Activated CD4-positive, alpha-beta T cell treated with anti-CD3 and anti-CD28 coated beads, Interleukin-2, amount 10 ng/mL, durations not matched to agents 24 days and 14 days (primary cell): ENCODE measurements at regions of chr1 and their contacts with region 1.

Region 1: GRCh38 chr1:76154206-76154956 is 79.8 kb downstream of the ST6GALNAC3 start:
- DNase-seq: peak; percentile 94
- H3K4me3 Mint-ChIP-seq: peak overlapping the region; percentile 84
- H3K27ac Mint-ChIP-seq: peak overlapping the region; percentile 88
- H3K4me1 Mint-ChIP-seq: peaks cover 7% of the 10 kb centered on the region
- H3K27me3 Mint-ChIP-seq: no peaks in the 10 kb centered on the region

Region 2: DNA sequence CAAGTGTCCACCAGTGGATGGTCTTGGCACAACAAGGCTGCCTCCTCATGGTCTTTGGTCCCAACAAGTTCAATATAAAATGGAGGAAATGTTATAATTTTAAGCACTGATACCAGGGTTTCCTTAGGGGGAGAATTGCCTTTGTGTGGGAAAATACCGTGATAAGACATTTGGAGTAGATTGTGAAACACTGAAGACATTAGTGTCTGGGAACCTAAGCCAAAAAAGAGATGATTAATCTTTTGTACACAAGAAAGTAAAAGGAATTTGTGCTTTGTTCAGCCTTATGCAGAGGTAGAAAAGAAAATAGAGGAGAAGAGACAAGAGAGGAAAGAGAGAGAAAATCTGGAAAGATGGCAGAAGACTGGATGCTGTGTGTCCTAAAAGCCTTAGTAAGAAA is 43.7 kb before region 1 on chr1:
- intact Hi-C with region 1: no loop called
- DNase-seq: no peak
- H3K4me3 Mint-ChIP-seq: no peak overlapping the region
- H3K27ac Mint-ChIP-seq: no peak overlapping the region
- H3K4me1 Mint-ChIP-seq: no peaks in the 10 kb centered on the region
- H3K27me3 Mint-ChIP-seq: no peaks in the 10 kb centered on the region

Region 3: DNA sequence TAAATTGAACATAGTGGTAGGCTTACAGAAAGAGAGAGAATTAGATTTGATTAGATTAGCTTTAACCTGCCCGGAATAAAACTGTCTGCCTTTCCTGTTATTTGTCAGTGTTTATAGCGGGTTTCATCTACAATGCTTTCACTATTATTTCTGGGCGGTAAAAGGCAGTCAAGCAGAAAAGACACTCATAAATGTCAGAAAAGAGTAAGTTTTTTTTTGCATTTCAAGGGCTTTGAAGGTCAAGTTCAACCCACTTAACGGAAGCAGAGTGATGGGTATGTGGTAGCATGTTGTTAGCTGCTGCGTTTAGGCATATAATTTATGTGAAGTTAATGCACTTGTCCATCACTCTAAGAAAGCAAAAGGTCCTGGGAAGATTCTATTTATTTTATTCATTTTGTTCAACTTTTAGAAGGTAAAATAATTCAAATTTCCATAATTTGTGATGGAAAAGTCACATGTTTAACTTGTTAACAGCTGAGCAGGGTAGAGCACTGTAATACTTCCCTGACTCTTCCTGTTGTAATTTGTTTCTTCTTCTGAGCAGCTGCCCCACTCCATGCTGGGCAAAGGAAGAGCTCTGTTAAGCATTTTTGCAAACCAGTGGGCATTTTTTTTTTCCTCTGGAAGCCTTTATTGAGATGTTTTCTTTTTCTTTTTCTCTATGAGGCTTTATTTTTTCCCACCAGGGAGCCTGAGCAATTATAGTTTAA is 140.3 kb after region 1 on chr1:
- intact Hi-C with region 1: loop called (anchors 10 kb)
- DNase-seq: peak; percentile 67
- H3K4me3 Mint-ChIP-seq: peak overlapping the region; percentile 54
- H3K27ac Mint-ChIP-seq: peak overlapping the region; percentile 35
- H3K4me1 Mint-ChIP-seq: peaks cover 41% of the 10 kb centered on the region
- H3K27me3 Mint-ChIP-seq: no peaks in the 10 kb centered on the region

Region 4: DNA sequence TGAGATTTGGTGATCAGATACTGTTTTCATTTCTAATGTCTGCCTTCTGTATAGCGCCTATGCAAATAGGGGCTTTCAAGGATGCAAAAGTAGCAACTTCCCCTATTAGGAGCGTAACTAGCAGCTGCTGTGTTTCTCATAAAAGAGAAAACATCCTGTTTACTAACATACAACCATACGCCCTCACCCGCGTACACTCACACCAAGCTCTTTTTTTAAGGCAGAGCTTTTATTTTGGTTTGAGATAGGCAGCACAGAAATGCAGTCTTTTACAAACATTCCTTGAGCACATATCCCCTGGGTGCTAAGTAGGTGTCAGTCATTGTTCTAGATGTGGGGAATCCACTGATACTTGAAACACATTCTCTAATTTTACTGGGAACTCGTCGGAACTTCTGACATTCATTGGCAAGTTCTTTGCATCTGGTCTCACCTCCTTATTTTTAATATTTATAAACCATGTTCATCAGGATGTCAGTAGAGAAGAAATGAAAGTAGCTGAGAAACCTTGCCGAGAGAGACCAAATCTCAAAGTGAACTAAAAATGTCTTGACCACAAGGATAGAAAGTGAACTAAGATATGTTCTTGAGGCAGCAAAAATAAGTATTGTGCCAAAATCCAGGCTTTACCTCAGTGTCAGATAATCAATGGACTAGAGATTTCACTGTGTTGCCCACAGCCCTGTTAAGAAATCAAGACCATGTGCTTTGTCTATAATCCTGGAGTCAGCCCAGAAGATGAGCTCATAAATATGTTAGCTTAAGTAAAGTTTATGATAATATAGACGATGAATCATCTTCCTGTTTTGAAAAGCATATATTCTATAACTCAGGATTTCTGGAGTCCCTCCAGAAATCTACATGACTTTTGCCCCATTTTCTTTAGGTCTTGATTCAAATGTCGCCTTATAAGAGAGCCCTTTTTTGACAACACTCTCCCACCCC is 271.1 kb after region 1 on chr1:
- intact Hi-C with region 1: loop called (anchors 10 kb)
- DNase-seq: no peak
- H3K4me3 Mint-ChIP-seq: no peak overlapping the region
- H3K27ac Mint-ChIP-seq: no peak overlapping the region
- H3K4me1 Mint-ChIP-seq: no peaks in the 10 kb centered on the region
- H3K27me3 Mint-ChIP-seq: no peaks in the 10 kb centered on the region

Region 5: GRCh38 chr1:76868154-76868882 is 713.9 kb after region 1 on chr1:
- intact Hi-C with region 1: loop called (anchors 10 kb)
- DNase-seq: peak; percentile 60
- H3K4me3 Mint-ChIP-seq: peak overlapping the region; percentile 77
- H3K27ac Mint-ChIP-seq: no peak overlapping the region
- H3K4me1 Mint-ChIP-seq: peaks cover 4% of the 10 kb centered on the region
- H3K27me3 Mint-ChIP-seq: peaks cover 71% of the 10 kb centered on the region

Region 6: DNA sequence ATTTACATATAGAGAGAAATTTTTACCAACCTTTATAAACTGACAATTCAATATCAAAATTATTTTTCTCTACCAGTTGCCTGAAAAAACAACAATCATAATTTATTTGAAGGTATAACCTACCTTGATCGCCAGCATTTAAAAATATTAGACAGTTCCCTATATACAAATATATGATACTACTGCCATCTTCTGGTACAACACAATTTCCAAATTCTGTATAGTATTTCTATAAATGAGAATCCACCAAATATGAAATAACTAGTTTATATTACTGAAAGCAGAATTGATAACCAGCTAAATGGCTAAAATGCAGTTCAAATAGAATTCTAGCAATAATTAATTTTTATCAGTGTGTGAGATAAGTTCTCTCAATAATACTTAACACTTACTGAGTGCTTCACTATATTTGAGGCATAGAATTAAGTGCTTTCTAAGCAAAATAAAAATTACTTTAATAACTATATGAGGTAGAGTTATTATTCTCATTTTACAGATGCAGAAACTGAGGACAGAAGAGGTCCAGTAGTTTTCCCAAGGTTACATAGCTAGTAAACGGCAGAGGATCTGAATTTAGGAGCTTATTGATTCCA is 989.2 kb after region 1 on chr1:
- intact Hi-C with region 1: loop called (anchors 1 kb)
- DNase-seq: no peak
- H3K4me3 Mint-ChIP-seq: no peak overlapping the region
- H3K27ac Mint-ChIP-seq: no peak overlapping the region
- H3K4me1 Mint-ChIP-seq: no peaks in the 10 kb centered on the region
- H3K27me3 Mint-ChIP-seq: no peaks in the 10 kb centered on the region